ENCODE measurements at regions of chr14 and their contacts with region 1.

Region 1: DNA sequence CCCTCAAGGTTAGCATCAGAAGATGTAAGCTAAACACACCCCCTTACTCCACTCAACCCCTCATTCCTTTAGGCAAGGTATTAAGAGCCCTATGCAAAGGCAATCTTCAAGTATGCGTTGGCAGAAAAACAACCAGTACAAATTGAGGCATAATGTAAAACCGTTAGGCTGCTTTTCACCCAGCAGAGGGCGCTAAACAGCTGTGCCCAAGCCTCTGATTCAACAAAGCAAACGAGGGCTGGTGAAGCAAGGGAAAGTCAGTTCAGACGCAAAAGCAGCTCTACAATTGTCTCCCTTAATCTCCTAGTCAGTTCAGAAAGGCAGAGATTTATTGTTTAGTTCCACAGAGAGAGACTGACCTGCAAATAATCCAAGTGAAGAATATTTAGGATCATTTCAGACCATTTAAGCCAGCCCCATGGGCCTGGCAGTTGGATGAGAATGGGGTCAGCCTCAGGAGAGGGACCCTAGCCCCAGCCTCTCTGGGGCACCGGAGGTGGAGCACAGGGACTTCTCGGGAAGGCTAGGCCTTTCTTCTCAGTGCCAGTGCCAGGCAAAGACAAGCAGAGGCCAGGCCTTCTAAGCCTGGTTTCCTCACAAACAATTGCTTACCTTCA is 23.5 kb downstream of the DCAF5 start:
- DNase-seq: peak; percentile 89
- H3K4me3 Mint-ChIP-seq: no peak overlapping the region
- H3K27ac Mint-ChIP-seq: no peak overlapping the region
- H3K4me1 Mint-ChIP-seq: peaks cover 26% of the 10 kb centered on the region
- H3K27me3 Mint-ChIP-seq: no peaks in the 10 kb centered on the region

Region 2: GRCh38 chr14:68951042-68951914 is 178.1 kb before region 1 on chr14:
- intact Hi-C with region 1: no loop called
- DNase-seq: no peak
- H3K4me3 Mint-ChIP-seq: no peak overlapping the region
- H3K27ac Mint-ChIP-seq: no peak overlapping the region
- H3K4me1 Mint-ChIP-seq: peaks cover 25% of the 10 kb centered on the region
- H3K27me3 Mint-ChIP-seq: no peaks in the 10 kb centered on the region

Region 3: DNA sequence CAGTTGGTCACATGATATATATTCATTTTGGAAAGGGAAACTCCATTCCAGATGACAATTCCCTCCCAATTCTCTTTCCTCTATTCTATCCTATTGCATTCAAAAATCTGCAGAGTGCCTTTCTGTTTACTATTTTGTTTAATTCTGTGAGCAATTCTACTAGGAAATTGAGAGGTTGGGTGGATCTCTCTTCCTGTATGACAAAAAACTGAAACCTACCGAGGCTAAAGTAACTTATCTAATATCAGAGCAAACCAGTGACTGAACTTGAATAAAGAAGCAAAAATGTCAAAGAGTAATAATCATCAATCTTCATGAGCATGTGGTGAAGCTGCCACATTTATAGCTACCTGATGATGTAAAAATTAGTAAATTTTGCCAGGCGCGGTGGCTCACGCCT is 133.6 kb before region 1 on chr14:
- intact Hi-C with region 1: no loop called
- DNase-seq: no peak
- H3K4me3 Mint-ChIP-seq: peak overlapping the region; percentile 34
- H3K27ac Mint-ChIP-seq: peak overlapping the region; percentile 18
- H3K4me1 Mint-ChIP-seq: peaks cover 10% of the 10 kb centered on the region
- H3K27me3 Mint-ChIP-seq: peaks cover 2% of the 10 kb centered on the region

Region 4: DNA sequence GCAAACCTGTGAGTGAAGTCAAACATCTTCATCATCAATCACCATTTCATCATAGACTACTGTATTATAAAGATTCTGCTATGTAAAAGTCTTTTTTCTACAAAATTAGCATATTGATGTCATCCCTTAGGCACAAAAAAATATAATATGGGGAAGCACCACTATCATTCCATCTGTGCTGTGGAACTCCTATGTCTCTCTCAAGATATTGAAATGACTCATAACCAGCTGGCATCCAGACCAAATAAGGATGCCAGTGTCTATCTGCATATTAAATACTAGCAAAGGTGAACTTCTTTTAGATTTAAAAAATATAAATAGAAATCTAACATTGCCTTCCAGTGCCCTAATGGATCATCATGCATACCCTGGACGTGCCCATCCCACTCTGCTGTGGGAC is 41.5 kb after region 1 on chr14:
- intact Hi-C with region 1: no loop called
- DNase-seq: no peak
- H3K4me3 Mint-ChIP-seq: no peak overlapping the region
- H3K27ac Mint-ChIP-seq: no peak overlapping the region
- H3K4me1 Mint-ChIP-seq: no peaks in the 10 kb centered on the region
- H3K27me3 Mint-ChIP-seq: peaks cover 14% of the 10 kb centered on the region

Region 5: DNA sequence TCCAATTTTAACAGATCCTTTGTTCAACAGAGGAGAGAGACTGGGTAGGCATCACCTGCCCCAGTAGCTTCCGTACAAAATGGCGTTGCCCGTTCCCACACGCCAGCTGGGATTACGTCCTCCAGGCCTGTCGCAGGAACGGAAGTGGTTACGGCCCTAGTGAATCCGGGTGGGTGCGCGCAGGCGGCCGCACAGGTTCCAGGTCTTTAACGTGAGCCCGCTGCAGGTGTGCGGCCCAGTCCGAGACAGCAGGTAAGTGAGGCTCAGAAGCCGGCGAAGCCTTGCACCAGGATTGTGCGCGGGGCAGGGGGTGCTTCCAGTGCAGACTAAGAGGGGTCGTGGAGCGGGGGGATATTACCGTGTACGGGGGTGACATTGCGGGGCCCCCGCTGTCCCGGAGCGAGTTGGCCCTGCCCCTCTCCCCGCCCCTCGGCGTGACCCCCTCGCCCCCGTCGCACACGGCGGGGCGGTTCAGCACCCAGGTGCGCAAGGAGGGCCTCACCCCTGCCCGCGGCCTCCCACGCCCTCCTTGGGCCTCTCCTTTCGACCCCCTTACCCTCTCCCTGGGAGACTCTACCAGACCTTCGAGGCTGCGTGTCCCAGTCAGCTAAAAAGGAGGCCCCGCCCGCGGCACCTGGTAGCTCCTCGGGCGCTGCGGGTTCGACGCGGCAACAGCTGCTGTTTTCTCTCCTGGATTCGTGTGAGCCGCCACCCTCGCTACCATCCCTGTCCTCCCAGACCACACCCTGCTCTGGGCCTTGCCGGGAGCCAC is 62.2 kb after region 1 on chr14 and contains the start of gene EXD2:
- intact Hi-C with region 1: loop called (anchors 2 kb)
- DNase-seq: peak; percentile 87
- H3K4me3 Mint-ChIP-seq: peak within 1 kb of the TSS; percentile 93
- H3K27ac Mint-ChIP-seq: peak within 1 kb of the TSS; percentile 83
- H3K4me1 Mint-ChIP-seq: peaks cover 11% of the 10 kb centered on the region
- H3K27me3 Mint-ChIP-seq: peaks cover 11% of the 10 kb centered on the region
- total RNA-seq, gene EXD2: 6.3 and 7.5 TPM in 2 replicates

Region 6: GRCh38 chr14:69242311-69243224 is 113.2 kb after region 1 on chr14:
- intact Hi-C with region 1: loop called (anchors 5 kb)
- DNase-seq: peak; percentile 85
- H3K4me3 Mint-ChIP-seq: no peak overlapping the region
- H3K27ac Mint-ChIP-seq: no peak overlapping the region
- H3K4me1 Mint-ChIP-seq: no peaks in the 10 kb centered on the region
- H3K27me3 Mint-ChIP-seq: peaks cover 1% of the 10 kb centered on the region

Region 7: DNA sequence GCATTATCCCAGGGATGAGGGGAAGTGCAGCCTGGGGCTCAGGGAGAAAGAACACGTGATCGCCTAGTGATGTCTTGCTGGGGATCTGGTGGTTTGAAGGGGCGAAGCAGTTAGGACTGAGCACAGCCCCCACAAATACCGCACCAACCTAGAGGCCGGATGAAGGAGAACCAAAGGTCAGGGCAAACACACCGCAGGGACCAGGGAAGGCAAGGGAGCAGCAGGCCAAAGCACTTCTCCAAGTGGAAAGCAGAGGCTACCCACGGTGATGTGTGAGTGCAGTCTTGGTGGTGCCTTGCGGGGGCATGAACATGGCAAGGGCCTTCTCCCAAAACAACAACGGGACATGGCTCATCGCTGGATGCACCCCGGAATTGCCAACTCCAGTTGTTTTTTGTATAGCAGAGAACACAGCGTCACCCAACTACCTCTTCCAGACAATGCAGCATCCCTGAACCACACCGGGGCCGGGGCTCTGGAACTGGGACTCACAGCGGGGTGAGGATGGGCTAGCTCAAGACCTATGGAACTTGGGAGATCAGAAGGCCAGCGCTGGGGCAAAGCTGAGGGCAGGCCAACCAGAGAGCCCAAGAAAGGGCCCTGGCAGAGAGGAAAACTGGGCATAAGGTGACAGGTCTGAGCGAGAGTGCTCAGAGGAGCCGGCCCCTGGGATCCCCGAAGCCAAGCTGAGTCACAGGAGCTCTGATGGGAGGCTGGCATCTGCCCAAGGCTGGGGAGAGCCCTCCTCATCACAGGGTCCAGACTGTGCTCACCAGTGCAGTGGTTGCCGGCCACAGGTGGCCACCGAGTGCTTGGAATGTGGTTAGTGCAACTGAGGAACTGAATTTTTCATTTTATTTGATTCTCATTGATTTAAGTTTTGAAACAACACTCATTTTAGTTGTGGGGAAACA is 141.7 kb after region 1 on chr14:
- intact Hi-C with region 1: no loop called
- DNase-seq: no peak
- H3K4me3 Mint-ChIP-seq: no peak overlapping the region
- H3K27ac Mint-ChIP-seq: no peak overlapping the region
- H3K4me1 Mint-ChIP-seq: no peaks in the 10 kb centered on the region
- H3K27me3 Mint-ChIP-seq: peaks cover 17% of the 10 kb centered on the region